HCT116 (cell line): ENCODE measurements at regions of chr1 and their contacts with region 1.

Region 1: DNA sequence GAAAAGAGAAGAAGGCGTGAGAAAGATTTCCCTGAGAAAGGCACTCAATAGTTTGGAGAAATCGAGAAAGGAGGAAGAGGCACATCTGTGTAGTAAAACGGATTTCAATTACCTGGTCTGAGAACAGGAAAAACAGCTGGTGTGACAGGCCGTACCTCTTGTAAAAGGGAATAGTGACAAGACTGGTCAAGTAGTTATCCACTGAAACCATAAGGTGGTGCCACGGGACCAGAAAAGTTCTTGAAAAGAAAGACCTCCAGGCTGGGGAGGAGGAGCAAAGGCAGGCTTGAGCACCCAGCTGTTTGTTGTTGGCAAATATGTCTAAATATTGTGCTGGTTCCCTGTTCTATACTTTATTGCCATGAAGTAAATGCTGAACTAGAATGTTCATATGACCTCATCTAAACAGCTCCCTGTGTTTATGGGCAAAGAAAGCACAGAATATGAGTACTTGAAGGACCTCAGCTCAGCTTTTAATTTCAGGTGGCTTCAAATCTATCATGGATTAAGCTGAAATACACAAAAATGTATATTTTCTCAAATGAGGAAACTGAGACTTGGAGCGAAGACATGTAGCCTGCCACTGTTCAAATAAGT is 4.0 kb downstream of the HAO2 start:
- DNase-seq: peak; percentile 49
- ATAC-seq: peak; percentile 79
- H3K4me3 ChIP-seq: no peak overlapping the region
- H3K27ac ChIP-seq: no peak overlapping the region
- H3K4me1 ChIP-seq: peaks cover 0 to 8% of the 10 kb centered on the region in 2 experiments; a peak in 1 of 4 replicates
- H3K27me3 ChIP-seq: 0 out of 2 replicates have a peak, but pooled peaks cover 7% of the 10 kb centered on the region
- CTCF ChIP-seq: peak; percentile 10 to 35 (median 25); a peak in 2 of 6 replicates
- POLR2A ChIP-seq: no peak
- RAD21 ChIP-seq: peak; percentile 54; the same call in 1 of the 2 replicates

Region 2: GRCh38 chr1:118688891-118689290 is 683.7 kb before region 1 on chr1:
- CTCF ChIA-PET with region 1: no interaction called
- POLR2A ChIA-PET with region 1: no interaction called
- RAD21 ChIA-PET with region 1: no interaction called
- intact Hi-C with region 1: no loop called
- DNase-seq: no peak
- ATAC-seq: no peak
- H3K4me3 ChIP-seq: no peak overlapping the region
- H3K27ac ChIP-seq: no peak overlapping the region
- H3K4me1 ChIP-seq: no peaks in the 10 kb centered on the region
- H3K27me3 ChIP-seq: no peaks in the 10 kb centered on the region
- CTCF ChIP-seq: no peak
- POLR2A ChIP-seq: no peak
- RAD21 ChIP-seq: no peak

Region 3: GRCh38 chr1:119353836-119354235 is 18.8 kb before region 1 on chr1:
- CTCF ChIA-PET with region 1: interaction called, 3 read pairs
- POLR2A ChIA-PET with region 1: no interaction called
- RAD21 ChIA-PET with region 1: no interaction called
- intact Hi-C with region 1: loop called (anchors 2 kb)
- DNase-seq: no peak
- ATAC-seq: no peak
- H3K4me3 ChIP-seq: no peak overlapping the region
- H3K27ac ChIP-seq: no peak overlapping the region
- H3K4me1 ChIP-seq: no peaks in the 10 kb centered on the region
- H3K27me3 ChIP-seq: no peaks in the 10 kb centered on the region
- CTCF ChIP-seq: no peak
- POLR2A ChIP-seq: no peak
- RAD21 ChIP-seq: no peak

Region 4: GRCh38 chr1:119544165-119544762 is 171.7 kb after region 1 on chr1:
- CTCF ChIA-PET with region 1: interaction called, 11 read pairs
- POLR2A ChIA-PET with region 1: no interaction called
- RAD21 ChIA-PET with region 1: no interaction called
- intact Hi-C with region 1: no loop called
- DNase-seq: peak; percentile 35
- ATAC-seq: peak; percentile 98
- H3K4me3 ChIP-seq: no peak overlapping the region
- H3K27ac ChIP-seq: no peak overlapping the region
- H3K4me1 ChIP-seq: no peaks in the 10 kb centered on the region
- H3K27me3 ChIP-seq: peaks cover 12% of the 10 kb centered on the region; the same call in 1 of the 2 replicates
- CTCF ChIP-seq: peak; percentile 41 to 89 (median 81); a peak in 5 of 6 replicates
- POLR2A ChIP-seq: no peak
- RAD21 ChIP-seq: peak; percentile 36